ENCODE measurements at regions of chr13 and their contacts with region 1.

Region 1: DNA sequence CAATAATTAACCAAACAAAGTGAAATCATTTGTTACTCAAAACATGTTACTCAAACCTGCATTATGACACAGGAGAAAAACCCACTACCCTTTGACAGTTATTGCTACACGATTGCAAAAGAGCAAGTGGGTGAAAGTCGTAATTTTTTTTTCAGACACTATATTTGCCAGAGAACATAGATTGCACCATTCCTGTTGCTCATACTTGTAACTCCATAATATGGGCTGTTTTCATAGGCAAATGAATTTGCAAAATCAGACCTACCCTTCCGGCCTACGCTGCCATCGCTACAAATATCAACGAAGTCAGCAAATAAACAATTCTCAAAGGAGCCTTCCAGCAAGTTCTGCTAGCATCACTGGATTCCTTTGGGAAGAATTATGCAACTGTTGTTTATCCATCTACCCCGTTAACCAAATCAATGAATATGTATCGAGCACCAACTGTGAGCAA is 396.5 kb downstream of the IRS2 start:
- DNase-seq: peak; percentile 25
- ATAC-seq: no peak
- H3K4me3 ChIP-seq: no peak overlapping the region
- H3K27ac ChIP-seq: no peak overlapping the region
- H3K4me1 ChIP-seq: peaks cover 7% of the 10 kb centered on the region
- H3K27me3 ChIP-seq: no peaks in the 10 kb centered on the region
- CTCF ChIP-seq: no peak
- POLR2A ChIP-seq: no peak
- RAD21 ChIP-seq: no peak

Region 2: GRCh38 chr13:109628251-109628699 is 238.4 kb after region 1 on chr13:
- CTCF ChIA-PET with region 1: no interaction called
- POLR2A ChIA-PET with region 1: no interaction called
- dilution Hi-C with region 1: no loop called
- in situ Hi-C with region 1: no loop called
- intact Hi-C with region 1: loop called (anchors 10 kb)
- DNase-seq: peak; percentile 61
- ATAC-seq: peak; percentile 61
- H3K4me3 ChIP-seq: no peak overlapping the region
- H3K27ac ChIP-seq: no peak overlapping the region
- H3K4me1 ChIP-seq: peaks cover 9% of the 10 kb centered on the region
- H3K27me3 ChIP-seq: peaks cover 7% of the 10 kb centered on the region
- CTCF ChIP-seq: no peak
- POLR2A ChIP-seq: no peak
- RAD21 ChIP-seq: no peak